CD4-positive, alpha-beta memory T cell (primary cell): ENCODE measurements at regions of chr1 and their contacts with region 1.

Region 1: GRCh38 chr1:225474986-225475820 is 47.4 kb upstream of the LBR start:
- DNase-seq: peak in 4 of 5 donors; percentile 66 to 80 (median 69)
- H3K4me3 ChIP-seq: no peak overlapping the region
- H3K4me3 Mint-ChIP-seq: no peak overlapping the region
- H3K27ac ChIP-seq: no peak overlapping the region
- H3K27ac Mint-ChIP-seq: peak overlapping the region in 5 of 7 donors; percentile 5 to 75 (median 23)
- H3K4me1 ChIP-seq: peaks cover 36% of the 10 kb centered on the region
- H3K4me1 Mint-ChIP-seq: peaks cover 27 to 50% (median 35%) of the 10 kb centered on the region in 4 donors
- H3K27me3 ChIP-seq: no peaks in the 10 kb centered on the region
- H3K27me3 Mint-ChIP-seq: peaks cover 0 to 3% of the 10 kb centered on the region in 2 donors

Region 2: GRCh38 chr1:225428068-225428880 is 46.9 kb before region 1 on chr1:
- CTCF ChIA-PET with region 1: interaction called, 11 read pairs
- POLR2A ChIA-PET with region 1: interaction called, 166 read pairs
- intact Hi-C with region 1: loop called (anchors 2 kb)
- DNase-seq: peak; percentile 91 to 92 (median 91)
- H3K4me3 ChIP-seq: peak overlapping the region; percentile 68 to 75
- H3K4me3 Mint-ChIP-seq: peak overlapping the region; percentile 84 to 97 (median 92)
- H3K27ac ChIP-seq: peak overlapping the region; percentile 78
- H3K27ac Mint-ChIP-seq: peak overlapping the region; percentile 86 to 97 (median 96)
- H3K4me1 ChIP-seq: peaks cover 41% of the 10 kb centered on the region
- H3K4me1 Mint-ChIP-seq: peaks cover 38 to 49% (median 44%) of the 10 kb centered on the region in 4 donors
- H3K27me3 ChIP-seq: no peaks in the 10 kb centered on the region
- H3K27me3 Mint-ChIP-seq: no peaks in the 10 kb centered on the region

Region 3: DNA sequence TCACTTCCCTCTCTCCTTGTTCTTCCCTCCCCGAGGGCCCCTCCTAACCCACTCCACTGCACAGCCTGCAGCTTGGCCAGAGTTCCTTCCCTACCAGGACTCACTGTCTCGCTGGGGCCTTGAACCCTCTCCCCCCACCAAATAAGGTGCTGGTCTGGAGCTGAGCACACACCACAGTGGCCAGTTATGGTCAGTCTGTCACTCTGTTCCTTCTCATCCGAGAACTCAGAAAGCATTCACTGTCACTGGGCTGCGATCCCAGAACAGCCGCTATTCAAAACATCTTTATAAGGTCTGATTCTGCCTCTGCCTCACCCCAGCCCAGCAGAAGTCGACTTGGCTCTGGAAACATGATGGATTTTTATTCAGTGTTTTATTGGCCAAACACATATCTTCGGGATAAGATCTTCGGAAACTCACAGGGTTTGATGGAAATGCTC is 27.5 kb before region 1 on chr1:
- CTCF ChIA-PET with region 1: interaction called, 43 read pairs
- POLR2A ChIA-PET with region 1: interaction called, 15 read pairs
- intact Hi-C with region 1: no loop called
- DNase-seq: no peak
- H3K4me3 ChIP-seq: no peak overlapping the region
- H3K4me3 Mint-ChIP-seq: no peak overlapping the region
- H3K27ac ChIP-seq: no peak overlapping the region
- H3K27ac Mint-ChIP-seq: peak overlapping the region in 1 of 7 donors; percentile 17
- H3K4me1 ChIP-seq: peaks cover 47% of the 10 kb centered on the region
- H3K4me1 Mint-ChIP-seq: peaks cover 29 to 55% (median 43%) of the 10 kb centered on the region in 4 donors
- H3K27me3 ChIP-seq: no peaks in the 10 kb centered on the region
- H3K27me3 Mint-ChIP-seq: no peaks in the 10 kb centered on the region

Region 4: GRCh38 chr1:225845571-225846259 is 370.5 kb after region 1 on chr1:
- CTCF ChIA-PET with region 1: interaction called, 3 read pairs
- POLR2A ChIA-PET with region 1: interaction called, 3 read pairs
- intact Hi-C with region 1: loop called (anchors 10 kb)
- DNase-seq: peak in 3 of 5 donors; percentile 33 to 40 (median 33)
- H3K4me3 ChIP-seq: no peak overlapping the region
- H3K4me3 Mint-ChIP-seq: peak overlapping the region in 1 of 8 donors; percentile 36
- H3K27ac ChIP-seq: no peak overlapping the region
- H3K27ac Mint-ChIP-seq: no peak overlapping the region
- H3K4me1 ChIP-seq: peaks cover 41% of the 10 kb centered on the region
- H3K4me1 Mint-ChIP-seq: peaks cover 25 to 57% (median 38%) of the 10 kb centered on the region in 4 donors
- H3K27me3 ChIP-seq: no peaks in the 10 kb centered on the region
- H3K27me3 Mint-ChIP-seq: no peaks in the 10 kb centered on the region

Region 5: DNA sequence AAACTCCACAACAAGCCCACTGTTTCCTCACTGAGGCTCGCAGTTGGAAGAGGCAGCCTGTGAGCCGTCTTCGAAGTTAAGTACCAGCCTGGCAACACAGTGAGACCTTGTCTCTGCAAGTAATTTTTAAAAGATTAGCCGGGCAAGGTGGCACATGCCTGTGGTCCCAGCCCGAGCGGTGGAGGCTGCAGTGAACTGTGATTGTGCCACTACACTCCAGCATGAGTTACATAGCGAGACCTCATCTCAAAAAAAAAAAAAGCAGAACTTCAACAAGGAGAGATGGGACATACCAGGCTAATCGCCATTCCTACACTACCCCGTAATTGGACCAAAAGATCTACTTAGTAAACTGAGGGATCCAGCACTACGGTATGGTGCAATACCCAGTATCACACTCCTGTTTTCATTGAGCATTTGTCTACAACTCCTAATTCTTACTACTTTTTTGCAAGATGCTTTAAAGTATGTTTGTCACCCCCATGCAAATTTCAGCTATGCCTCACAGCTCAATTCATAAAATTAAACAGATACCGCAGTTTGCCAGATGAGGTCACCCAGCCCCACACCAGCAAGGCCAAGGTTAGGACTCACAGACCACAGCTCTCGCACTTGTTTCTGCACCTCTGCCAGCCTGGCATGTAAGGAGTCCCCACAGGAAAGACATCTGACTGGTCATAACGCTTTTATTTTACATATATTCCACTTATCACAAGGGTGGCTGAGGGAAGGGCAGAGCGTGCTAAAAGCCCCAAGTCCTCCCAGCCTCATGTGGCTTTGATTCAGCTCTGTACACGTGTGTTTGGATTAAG is 502.9 kb after region 1 on chr1:
- CTCF ChIA-PET with region 1: interaction called, 48 read pairs
- POLR2A ChIA-PET with region 1: no interaction called
- intact Hi-C with region 1: loop called (anchors 1 kb)
- DNase-seq: no peak
- H3K4me3 ChIP-seq: no peak overlapping the region
- H3K4me3 Mint-ChIP-seq: no peak overlapping the region
- H3K27ac ChIP-seq: no peak overlapping the region
- H3K27ac Mint-ChIP-seq: peak overlapping the region in 1 of 7 donors; percentile 43
- H3K4me1 ChIP-seq: no peaks in the 10 kb centered on the region
- H3K4me1 Mint-ChIP-seq: peaks cover 0 to 6% (median 5%) of the 10 kb centered on the region in 4 donors
- H3K27me3 ChIP-seq: no peaks in the 10 kb centered on the region
- H3K27me3 Mint-ChIP-seq: no peaks in the 10 kb centered on the region

Region 6: GRCh38 chr1:226201029-226201593 is 725.9 kb after region 1 on chr1:
- CTCF ChIA-PET with region 1: no interaction called
- POLR2A ChIA-PET with region 1: no interaction called
- intact Hi-C with region 1: loop called (anchors 1 kb)
- DNase-seq: no peak
- H3K4me3 ChIP-seq: no peak overlapping the region
- H3K4me3 Mint-ChIP-seq: no peak overlapping the region
- H3K27ac ChIP-seq: no peak overlapping the region
- H3K27ac Mint-ChIP-seq: no peak overlapping the region
- H3K4me1 ChIP-seq: no peaks in the 10 kb centered on the region
- H3K4me1 Mint-ChIP-seq: peaks cover 0 to 2% (median 0%) of the 10 kb centered on the region in 4 donors
- H3K27me3 ChIP-seq: no peaks in the 10 kb centered on the region
- H3K27me3 Mint-ChIP-seq: peaks cover 3 to 12% of the 10 kb centered on the region in 2 donors